Upper lobe of right lung (tissue), 1 donor: ENCODE measurements at regions of chr16 and their contacts with region 1.

Region 1: GRCh38 chr16:23434380-23434779 is 18.6 kb downstream of the COG7 start:
- DNase-seq: no peak
- ATAC-seq: peak; percentile 77
- H3K4me3 ChIP-seq: no peak overlapping the region
- H3K27ac ChIP-seq: no peak overlapping the region
- H3K4me1 ChIP-seq: peaks cover 17% of the 10 kb centered on the region
- H3K27me3 ChIP-seq: no peaks in the 10 kb centered on the region
- CTCF ChIP-seq: peak; percentile 86

Region 2: GRCh38 chr16:23182460-23183309 is 251.7 kb before region 1 on chr16 and contains the start of gene SCNN1G:
- intact Hi-C with region 1: loop called (anchors 5 kb)
- DNase-seq: peak; percentile 93
- ATAC-seq: peak; percentile 99
- H3K4me3 ChIP-seq: peak within 1 kb of the TSS; percentile 57
- H3K27ac ChIP-seq: no peak within 1 kb of the TSS
- H3K4me1 ChIP-seq: peaks cover 15% of the 10 kb centered on the region
- H3K27me3 ChIP-seq: peaks cover 29% of the 10 kb centered on the region
- CTCF ChIP-seq: peak; percentile 88
- total RNA-seq, gene SCNN1G: 14.8 TPM

Region 3: GRCh38 chr16:23534868-23535860 is 100.8 kb after region 1 on chr16:
- intact Hi-C with region 1: no loop called
- DNase-seq: no peak
- ATAC-seq: peak; percentile 27
- H3K4me3 ChIP-seq: no peak overlapping the region
- H3K27ac ChIP-seq: no peak overlapping the region
- H3K4me1 ChIP-seq: no peaks in the 10 kb centered on the region
- H3K27me3 ChIP-seq: no peaks in the 10 kb centered on the region
- CTCF ChIP-seq: no peak